ENCODE measurements at regions of chr4 and their contacts with region 1.

Region 1: GRCh38 chr4:139651282-139652194 is 14.1 kb upstream of the MGST2 start:
- H3K4me3 ChIP-seq: no peak overlapping the region
- H3K27ac ChIP-seq: no peak overlapping the region
- H3K4me1 ChIP-seq: no peaks in the 10 kb centered on the region
- CTCF ChIP-seq: peak; percentile 54; the same call in 1 of the 2 replicates

Region 2: GRCh38 chr4:139515531-139515958 is 136.0 kb before region 1 on chr4:
- CTCF ChIA-PET with region 1: no interaction called
- POLR2A ChIA-PET with region 1: no interaction called
- H3K4me3 ChIP-seq: no peak overlapping the region
- H3K27ac ChIP-seq: no peak overlapping the region
- H3K4me1 ChIP-seq: no peaks in the 10 kb centered on the region
- CTCF ChIP-seq: no peak

Region 3: DNA sequence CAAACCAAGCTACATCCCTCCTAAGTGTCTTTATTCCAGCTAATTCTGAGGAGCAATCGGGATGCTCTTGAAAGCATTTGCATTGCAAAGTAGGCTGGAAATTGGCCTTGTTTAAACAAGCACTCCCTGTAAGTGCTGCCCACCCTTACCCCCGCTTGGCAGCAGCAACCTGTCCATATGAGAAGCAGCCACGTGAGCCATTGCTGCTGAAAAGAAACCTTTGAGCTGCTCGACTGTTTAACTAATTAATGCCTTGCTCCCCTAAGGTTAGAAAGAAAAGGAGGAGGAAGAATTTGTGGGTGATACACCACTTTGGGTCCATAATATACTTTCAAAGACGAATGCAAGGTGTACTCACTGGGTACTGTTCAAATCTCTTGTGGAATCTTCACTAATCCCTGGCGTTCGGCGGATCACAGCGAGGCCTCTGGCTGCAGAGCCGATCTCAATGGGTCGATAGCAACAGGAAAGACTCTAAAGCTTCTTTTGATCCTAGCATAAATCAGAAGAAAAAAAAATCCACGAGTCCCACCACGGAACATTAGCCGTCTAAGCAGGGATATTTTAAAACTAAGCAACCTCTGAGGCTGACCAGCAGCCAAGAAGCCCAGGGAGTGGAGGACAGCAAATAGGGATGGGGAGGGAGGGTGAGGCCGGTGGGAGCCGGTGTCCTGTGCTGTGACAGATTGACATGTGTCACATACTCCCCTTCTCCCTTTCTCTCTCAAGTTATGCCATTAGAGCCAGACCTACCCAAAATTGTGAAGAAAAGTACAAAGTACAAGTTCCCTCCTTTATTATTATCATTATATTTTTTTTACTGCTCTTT is 23.1 kb before region 1 on chr4:
- CTCF ChIA-PET with region 1: interaction called, 14 read pairs
- POLR2A ChIA-PET with region 1: no interaction called
- H3K4me3 ChIP-seq: no peak overlapping the region
- H3K27ac ChIP-seq: no peak overlapping the region
- H3K4me1 ChIP-seq: no peaks in the 10 kb centered on the region
- CTCF ChIP-seq: no peak

Region 4: DNA sequence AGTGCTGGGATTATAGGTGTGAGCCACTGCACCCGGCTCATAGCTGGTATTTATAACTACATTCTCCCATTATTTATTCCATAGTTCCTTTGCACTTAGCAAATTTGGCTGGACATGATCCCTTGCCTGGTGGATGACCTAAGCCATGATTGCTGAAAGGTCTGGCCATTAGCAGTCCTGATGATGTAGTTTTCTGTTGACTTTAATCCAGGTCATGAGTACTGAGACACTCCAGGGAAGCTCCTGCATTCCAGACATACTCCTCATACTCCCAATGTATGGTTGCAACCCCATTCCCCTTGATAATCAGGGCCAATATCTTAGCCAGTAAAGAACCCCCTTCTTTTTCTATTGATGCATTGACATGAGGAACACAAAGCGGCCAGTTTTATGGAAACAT is 10.3 kb before region 1 on chr4:
- CTCF ChIA-PET with region 1: interaction called, 16 read pairs
- POLR2A ChIA-PET with region 1: no interaction called
- H3K4me3 ChIP-seq: no peak overlapping the region
- H3K27ac ChIP-seq: no peak overlapping the region
- H3K4me1 ChIP-seq: no peaks in the 10 kb centered on the region
- CTCF ChIP-seq: no peak